Motor neuron (in vitro differentiated cells): ENCODE measurements at regions of chr9 and their contacts with region 1.

Region 1: DNA sequence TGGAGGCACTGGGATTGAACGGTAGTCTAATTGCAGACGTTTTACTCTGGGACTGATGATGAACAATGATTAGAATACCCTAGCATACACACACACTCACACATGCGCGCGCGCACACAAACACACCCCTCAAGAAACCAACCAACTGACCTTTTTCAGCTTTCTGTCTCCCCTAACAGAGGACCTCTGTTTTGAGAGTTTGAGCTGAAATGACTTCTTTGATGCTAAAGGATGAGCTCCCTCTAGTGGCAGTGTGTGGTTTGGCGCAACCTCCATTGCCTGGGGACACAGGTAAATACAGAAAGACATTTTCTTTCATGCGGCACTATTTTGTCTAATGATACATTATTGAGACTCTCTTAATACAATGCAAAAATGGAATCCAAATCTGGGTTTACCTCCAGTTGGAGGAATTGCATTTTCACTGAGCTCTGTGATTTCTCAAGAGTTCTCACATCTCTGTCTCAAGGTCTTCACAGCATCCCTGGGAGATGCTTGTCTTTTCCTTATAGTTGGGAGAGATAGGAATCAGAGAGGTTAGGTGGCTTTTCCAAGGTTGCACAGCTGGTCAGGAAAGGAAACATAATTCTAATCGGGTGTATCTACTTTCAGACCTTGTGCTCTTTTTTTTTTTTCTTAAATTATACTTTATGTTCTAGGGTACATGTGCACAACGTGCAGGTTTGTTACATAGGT is 187.5 kb downstream of the TMEM38B start:
- ATAC-seq: peak in 4 of 8 experiments; percentile 29 to 95 (median 86)
- H3K4me3 ChIP-seq: no peak overlapping the region
- H3K27ac ChIP-seq: no peak overlapping the region
- H3K4me1 ChIP-seq: no peaks in the 10 kb centered on the region

Region 2: DNA sequence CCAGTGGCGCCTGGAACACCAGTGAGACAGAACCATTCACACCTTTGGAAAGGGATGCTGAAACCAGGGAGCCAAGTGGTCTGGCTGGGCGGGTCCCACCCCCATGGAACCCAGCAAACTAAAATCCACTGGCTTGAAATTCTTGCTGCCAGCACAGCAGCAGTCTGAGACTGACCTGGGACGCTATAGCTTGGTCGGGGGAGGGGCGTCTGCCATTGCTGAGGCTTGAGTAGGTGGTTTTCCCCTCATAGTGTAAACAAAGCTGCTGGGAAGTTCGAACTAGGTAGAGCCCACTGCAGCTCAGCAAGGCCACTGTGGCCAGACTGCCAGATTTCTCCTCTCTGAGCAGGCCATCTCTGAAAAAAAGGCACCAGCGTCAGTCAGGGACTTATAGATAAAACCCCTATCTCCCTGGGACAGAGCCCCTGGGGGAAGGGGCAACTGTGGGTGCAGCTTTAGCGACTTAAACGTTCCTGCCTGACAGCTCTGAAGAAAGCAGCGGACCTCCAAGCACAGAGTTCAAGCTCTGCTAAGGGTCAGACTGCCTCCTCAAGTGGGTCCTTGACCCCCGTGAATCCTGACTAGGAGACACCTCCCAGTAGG is 365.9 kb before region 1 on chr9:
- in situ Hi-C with region 1: no loop called
- ATAC-seq: no peak
- H3K4me3 ChIP-seq: no peak overlapping the region
- H3K27ac ChIP-seq: no peak overlapping the region
- H3K4me1 ChIP-seq: no peaks in the 10 kb centered on the region

Region 3: GRCh38 chr9:105835721-105836120 is 46.1 kb before region 1 on chr9:
- in situ Hi-C with region 1: loop called in 1 of 9 experiments (anchors 10 kb)
- ATAC-seq: no peak
- H3K4me3 ChIP-seq: no peak overlapping the region
- H3K27ac ChIP-seq: no peak overlapping the region
- H3K4me1 ChIP-seq: peaks cover 0 to 7% of the 10 kb centered on the region in 2 donors

Region 4: DNA sequence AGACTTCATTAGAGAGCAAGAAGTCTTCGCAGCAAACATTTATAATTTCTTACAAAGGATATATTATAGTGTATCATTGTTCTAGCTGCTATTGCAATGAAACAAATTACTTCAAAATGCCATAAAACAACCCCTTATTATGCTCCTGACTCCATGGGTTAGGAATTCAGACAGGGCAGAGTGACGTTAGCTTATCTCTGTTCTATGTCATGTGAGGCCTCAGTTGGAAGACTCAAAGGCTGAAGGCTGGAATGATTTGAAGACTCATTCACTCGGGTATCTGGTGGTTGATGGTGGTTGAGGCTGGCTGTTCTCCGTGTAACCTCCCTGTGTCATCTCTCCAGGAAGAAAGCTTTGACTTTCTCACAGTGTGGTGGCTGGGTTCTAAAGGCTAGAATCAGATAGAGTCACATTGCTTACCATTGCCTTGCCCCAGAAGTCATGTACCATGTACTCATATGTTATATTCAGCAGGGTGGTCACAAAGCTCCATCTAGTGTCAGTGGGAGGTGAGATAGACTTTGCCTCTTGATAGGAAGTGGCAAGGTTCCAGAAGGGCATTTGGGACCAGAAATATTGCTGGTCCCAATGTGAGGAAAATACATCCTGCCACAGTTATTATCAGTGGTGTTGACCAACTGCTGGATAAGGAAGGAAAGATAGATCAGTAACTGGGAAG is 39.4 kb after region 1 on chr9:
- in situ Hi-C with region 1: no loop called
- ATAC-seq: no peak
- H3K4me3 ChIP-seq: no peak overlapping the region
- H3K27ac ChIP-seq: no peak overlapping the region
- H3K4me1 ChIP-seq: no peaks in the 10 kb centered on the region